ENCODE measurements at regions of chr1 and their contacts with region 1.

Region 1: GRCh38 chr1:97108179-97108578 is 386.6 kb downstream of the PTBP2 start:
- DNase-seq: peak; percentile 20
- ATAC-seq: no peak
- H3K4me3 ChIP-seq: no peak overlapping the region
- H3K27ac ChIP-seq: no peak overlapping the region
- H3K4me1 ChIP-seq: no peaks in the 10 kb centered on the region; the same call in 1 of the 2 replicates
- H3K27me3 ChIP-seq: no peaks in the 10 kb centered on the region
- CTCF ChIP-seq: no peak
- POLR2A ChIP-seq: no peak
- RAD21 ChIP-seq: no peak

Region 2: GRCh38 chr1:97069312-97069711 is 38.9 kb before region 1 on chr1:
- CTCF ChIA-PET with region 1: no interaction called
- POLR2A ChIA-PET with region 1: no interaction called
- dilution Hi-C with region 1: no loop called
- in situ Hi-C with region 1: no loop called
- intact Hi-C with region 1: loop called (anchors 1 kb)
- DNase-seq: no peak
- ATAC-seq: no peak
- H3K4me3 ChIP-seq: no peak overlapping the region
- H3K27ac ChIP-seq: no peak overlapping the region
- H3K4me1 ChIP-seq: no peaks in the 10 kb centered on the region
- H3K27me3 ChIP-seq: no peaks in the 10 kb centered on the region
- CTCF ChIP-seq: no peak
- POLR2A ChIP-seq: no peak
- RAD21 ChIP-seq: no peak

Region 3: DNA sequence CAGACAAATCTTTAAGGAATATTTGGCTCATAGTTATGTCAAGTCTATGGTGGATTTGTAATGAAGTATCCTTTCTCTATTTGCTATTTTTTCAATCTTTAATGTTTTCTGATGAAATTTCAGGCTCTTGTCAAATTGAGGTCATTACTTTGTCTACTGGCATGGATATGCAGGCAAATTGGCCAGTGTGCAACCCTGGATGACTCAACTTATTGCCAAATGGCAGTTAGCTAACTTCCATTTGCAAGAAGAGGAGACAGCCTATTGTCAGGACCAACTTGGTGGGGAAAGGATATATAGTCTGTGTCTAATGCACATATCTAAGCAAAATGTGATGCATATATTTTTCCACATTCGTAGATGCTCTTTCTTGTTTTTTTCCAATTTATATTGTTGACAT is 143.9 kb after region 1 on chr1:
- CTCF ChIA-PET with region 1: no interaction called
- POLR2A ChIA-PET with region 1: no interaction called
- dilution Hi-C with region 1: no loop called
- in situ Hi-C with region 1: no loop called
- intact Hi-C with region 1: no loop called
- DNase-seq: peak; percentile 81
- ATAC-seq: peak; percentile 29; the same call in 1 of the 2 replicates
- H3K4me3 ChIP-seq: no peak overlapping the region
- H3K27ac ChIP-seq: no peak overlapping the region
- H3K4me1 ChIP-seq: no peaks in the 10 kb centered on the region
- H3K27me3 ChIP-seq: no peaks in the 10 kb centered on the region
- CTCF ChIP-seq: no peak
- POLR2A ChIP-seq: no peak
- RAD21 ChIP-seq: no peak